ENCODE measurements at regions of chr12 and their contacts with region 1.

Region 1: GRCh38 chr12:57904848-57905811 is 36.2 kb upstream of the ATP23 start:
- DNase-seq: peak; percentile 82 to 90
- ATAC-seq: peak; percentile 97 to 99 (median 98)
- H3K4me3 ChIP-seq: peak overlapping the region; percentile 46
- H3K27ac ChIP-seq: peak overlapping the region; percentile 54
- H3K4me1 ChIP-seq: no peaks in the 10 kb centered on the region
- H3K27me3 ChIP-seq: no peaks in the 10 kb centered on the region
- CTCF ChIP-seq: peak; percentile 100

Region 2: DNA sequence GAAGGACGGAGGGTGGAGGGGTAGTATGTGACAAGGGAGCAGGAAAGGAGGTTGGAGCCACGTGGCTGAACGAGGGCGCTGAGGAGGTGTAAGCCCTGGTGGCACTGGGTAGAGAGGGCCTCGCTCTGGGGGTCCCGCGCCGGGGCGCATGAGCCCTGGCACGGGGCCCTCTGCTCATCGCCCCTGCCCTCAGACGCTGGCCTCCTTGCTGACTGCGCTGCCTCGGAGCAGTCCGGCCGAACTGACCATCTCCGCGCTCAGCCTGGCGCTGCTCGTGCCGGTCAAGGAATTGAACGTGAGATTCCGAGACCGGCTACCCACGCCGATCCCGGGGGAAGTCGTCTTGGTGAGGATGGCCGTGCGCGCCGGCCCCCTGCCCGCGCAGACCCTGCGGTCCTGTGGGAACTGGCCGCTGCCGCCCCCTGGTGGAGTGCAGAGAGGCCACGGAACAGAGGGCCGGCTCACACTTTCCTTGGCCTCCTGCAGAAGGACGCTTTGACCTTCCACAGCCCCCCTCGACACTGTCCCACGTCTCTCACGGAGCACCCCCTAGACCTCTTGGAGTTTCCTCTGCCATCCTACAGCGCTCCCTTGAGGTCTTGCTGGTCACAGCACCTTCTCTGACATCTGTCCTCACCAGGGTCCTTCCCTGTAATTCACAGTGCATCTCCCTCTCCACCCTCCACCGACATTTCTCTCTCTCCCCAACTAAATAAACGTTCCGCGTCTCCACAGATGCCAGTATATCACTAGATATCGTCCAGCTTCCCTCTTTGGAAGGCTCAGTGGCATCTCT is 283.4 kb before region 1 on chr12:
- intact Hi-C with region 1: no loop called
- DNase-seq: peak; percentile 64 to 81
- ATAC-seq: peak; percentile 78 to 85 (median 82)
- H3K4me3 ChIP-seq: peak overlapping the region; percentile 61
- H3K27ac ChIP-seq: no peak overlapping the region
- H3K4me1 ChIP-seq: peaks cover 7% of the 10 kb centered on the region
- H3K27me3 ChIP-seq: peaks cover 0 to 64% (median 12%) of the 10 kb centered on the region in 3 donors
- CTCF ChIP-seq: peak; percentile 91

Region 3: GRCh38 chr12:57782608-57783465 is 122.3 kb before region 1 on chr12 and contains the start of gene TSFM:
- intact Hi-C with region 1: loop called in 1 of 2 experiments (anchors 1 kb)
- DNase-seq: peak; percentile 98 to 99
- ATAC-seq: peak; percentile 96 to 99 (median 98)
- H3K4me3 ChIP-seq: peak within 1 kb of the TSS; percentile 83
- H3K27ac ChIP-seq: peak within 1 kb of the TSS; percentile 84
- H3K4me1 ChIP-seq: peaks cover 17% of the 10 kb centered on the region
- H3K27me3 ChIP-seq: no peaks in the 10 kb centered on the region
- CTCF ChIP-seq: peak; percentile 88
- total RNA-seq, gene TSFM: 31.5 to 52.8 (median 50.2) TPM

Region 4: DNA sequence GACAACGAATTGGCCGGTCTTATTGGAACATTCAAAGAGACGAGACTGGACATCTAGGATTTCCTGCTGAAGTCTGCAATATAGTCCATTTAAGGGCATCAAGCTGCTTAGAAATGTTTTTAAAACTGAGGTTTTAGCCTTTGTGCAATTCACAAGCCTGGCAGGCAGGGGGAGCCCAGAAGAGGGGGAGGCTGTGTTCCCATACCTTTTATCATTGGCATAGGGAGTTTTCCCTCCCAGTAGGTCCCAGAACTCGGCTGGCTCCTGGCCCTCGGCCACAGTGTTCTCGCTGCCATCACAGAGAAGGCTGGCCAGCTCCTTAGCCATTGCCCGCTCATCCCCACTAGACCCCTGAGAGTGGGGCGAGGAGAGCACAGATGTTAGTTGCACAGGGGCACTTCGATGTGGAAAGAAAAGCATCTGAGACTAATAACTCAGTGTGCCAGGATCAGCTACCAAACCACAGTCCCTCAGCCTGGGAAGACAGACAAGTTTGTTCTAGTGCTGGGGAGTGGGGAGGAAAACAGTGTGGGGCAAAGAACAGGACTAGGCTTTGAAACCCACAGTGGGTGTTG is 101.7 kb before region 1 on chr12:
- intact Hi-C with region 1: loop called in 1 of 2 experiments (anchors 5 kb)
- DNase-seq: peak in 1 of 2 donors; percentile 55
- ATAC-seq: peak; percentile 39 to 73 (median 60)
- H3K4me3 ChIP-seq: no peak overlapping the region
- H3K27ac ChIP-seq: no peak overlapping the region
- H3K4me1 ChIP-seq: no peaks in the 10 kb centered on the region
- H3K27me3 ChIP-seq: no peaks in the 10 kb centered on the region
- CTCF ChIP-seq: peak; percentile 64

Region 5: GRCh38 chr12:57846577-57847319 is 58.4 kb before region 1 on chr12 and contains the start of gene CTDSP2:
- intact Hi-C with region 1: no loop called
- DNase-seq: peak; percentile 100
- ATAC-seq: peak; percentile 82 to 87 (median 83)
- H3K4me3 ChIP-seq: peak within 1 kb of the TSS; percentile 96
- H3K27ac ChIP-seq: peak within 1 kb of the TSS; percentile 100
- H3K4me1 ChIP-seq: peaks cover 64% of the 10 kb centered on the region
- H3K27me3 ChIP-seq: no peaks in the 10 kb centered on the region
- CTCF ChIP-seq: peak; percentile 16
- total RNA-seq, gene CTDSP2: 71.3 to 91.8 (median 80.0) TPM

Measured in psoas muscle (tissue), 8 donors.